AG04449 (cell line): ENCODE measurements at regions of chr19 and their contacts with region 1.

Region 1: GRCh38 chr19:47094557-47095475 is 18.8 kb downstream of the ZC3H4 start:
- DNase-seq: no peak
- H3K4me3 ChIP-seq: no peak overlapping the region
- CTCF ChIP-seq: no peak

Region 2: DNA sequence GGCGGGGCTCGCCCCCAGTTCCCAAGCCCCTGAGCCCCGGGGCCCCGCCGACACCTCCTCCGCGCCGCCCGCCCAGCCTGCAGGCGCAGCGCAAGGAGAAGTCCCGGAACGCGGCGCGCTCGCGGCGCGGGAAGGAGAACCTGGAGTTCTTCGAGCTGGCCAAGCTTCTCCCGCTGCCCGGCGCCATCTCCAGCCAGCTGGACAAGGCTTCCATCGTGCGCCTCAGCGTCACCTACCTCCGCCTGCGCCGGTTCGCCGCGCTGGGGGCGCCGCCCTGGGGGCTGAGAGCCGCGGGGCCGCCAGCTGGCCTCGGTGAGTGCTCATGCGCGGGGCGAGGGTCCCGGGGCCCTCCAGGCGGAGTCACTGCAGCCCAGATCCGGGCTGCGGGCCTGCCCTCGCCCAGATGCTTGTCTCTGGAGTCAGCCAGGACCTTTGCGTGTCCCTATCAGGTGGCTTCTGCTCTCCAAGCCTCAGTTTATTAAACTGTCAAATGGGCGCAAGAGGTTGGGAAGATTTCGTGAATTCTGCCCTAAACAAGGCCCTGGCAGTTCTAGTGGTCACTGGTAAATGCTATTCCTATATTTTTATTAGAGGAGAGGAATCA is 73.2 kb before region 1 on chr19:
- CTCF ChIA-PET with region 1: no interaction called
- POLR2A ChIA-PET with region 1: no interaction called
- DNase-seq: no peak
- H3K4me3 ChIP-seq: peak overlapping the region; percentile 52
- CTCF ChIP-seq: no peak

Region 3: DNA sequence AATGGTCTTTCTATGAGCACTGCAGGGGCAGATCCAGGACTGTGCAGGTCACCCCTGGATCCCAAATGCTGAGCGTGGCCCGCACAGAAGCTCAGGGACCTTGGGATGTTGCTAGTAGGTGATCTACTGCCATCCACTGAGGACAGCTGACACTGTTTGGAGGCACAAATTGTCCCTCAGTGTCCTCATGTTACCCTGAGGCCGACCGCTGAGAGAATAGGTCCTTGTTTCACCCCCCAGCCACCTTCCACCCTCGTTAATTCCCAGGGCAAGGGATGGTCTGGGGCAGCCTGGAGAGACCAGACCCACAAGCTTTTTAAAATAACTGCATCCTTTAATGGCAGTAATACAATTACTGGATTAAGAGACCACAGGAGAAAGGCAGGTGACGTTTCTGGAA is 30.9 kb before region 1 on chr19:
- CTCF ChIA-PET with region 1: no interaction called
- POLR2A ChIA-PET with region 1: no interaction called
- DNase-seq: no peak
- H3K4me3 ChIP-seq: no peak overlapping the region
- CTCF ChIP-seq: no peak

Region 4: DNA sequence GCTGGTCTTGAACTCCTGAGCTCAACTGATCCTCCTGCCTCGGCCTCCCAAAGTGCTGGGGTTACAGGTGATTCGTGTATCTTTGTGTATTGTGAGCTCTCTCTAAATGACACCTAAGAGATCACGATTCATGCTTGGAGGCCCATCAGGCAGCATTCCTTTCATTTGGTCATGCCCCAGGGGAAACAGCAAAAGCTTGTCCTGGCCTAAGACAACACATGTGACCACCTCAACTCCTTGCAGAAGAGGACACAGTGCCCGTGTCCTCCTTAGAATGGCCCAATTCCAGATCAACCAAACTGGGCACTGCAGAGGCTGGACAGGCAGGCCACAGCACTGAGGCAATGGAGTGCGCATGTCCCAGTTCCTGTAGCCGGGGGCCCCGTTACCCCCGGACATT is 13.7 kb before region 1 on chr19:
- CTCF ChIA-PET with region 1: interaction called, 21 read pairs
- POLR2A ChIA-PET with region 1: no interaction called
- DNase-seq: no peak
- H3K4me3 ChIP-seq: no peak overlapping the region
- CTCF ChIP-seq: no peak